T-cell (primary cell): ENCODE measurements at regions of chr5 and their contacts with region 1.

Region 1: GRCh38 chr5:139633295-139634027 is 14.7 kb upstream of the CXXC5 start:
- DNase-seq: peak in 30 of 35 experiments; percentile 32 to 87 (median 54)
- ATAC-seq: peak; percentile 33 to 49 (median 42)
- H3K4me3 ChIP-seq: no peak overlapping the region
- H3K4me3 Mint-ChIP-seq: no peak overlapping the region
- H3K27ac ChIP-seq: no peak overlapping the region
- H3K27ac Mint-ChIP-seq: peak overlapping the region in 1 of 2 donors; percentile 19
- H3K4me1 ChIP-seq: peaks cover 17 to 51% of the 10 kb centered on the region in 2 experiments
- H3K4me1 Mint-ChIP-seq: peaks cover 41 to 43% (median 42%) of the 10 kb centered on the region in 3 donors
- H3K27me3 ChIP-seq: no peaks in the 10 kb centered on the region
- H3K27me3 Mint-ChIP-seq: no peaks in the 10 kb centered on the region

Region 2: GRCh38 chr5:139560752-139561654 is 72.5 kb before region 1 on chr5 and contains the start of gene UBE2D2:
- CTCF ChIA-PET with region 1: interaction called in 1 of 2 experiments, 11 read pairs
- POLR2A ChIA-PET with region 1: interaction called in 1 of 2 experiments, 5 read pairs
- DNase-seq: peak; percentile 92 to 100 (median 96)
- ATAC-seq: peak; percentile 85 to 89 (median 86)
- H3K4me3 ChIP-seq: peak within 1 kb of the TSS; percentile 70 to 71
- H3K4me3 Mint-ChIP-seq: peak within 1 kb of the TSS; percentile 98 to 99 (median 98)
- H3K27ac ChIP-seq: peak within 1 kb of the TSS; percentile 84
- H3K27ac Mint-ChIP-seq: peak within 1 kb of the TSS; percentile 96 to 98
- H3K4me1 ChIP-seq: peaks cover 25 to 32% of the 10 kb centered on the region in 2 experiments
- H3K4me1 Mint-ChIP-seq: peaks cover 40 to 45% (median 43%) of the 10 kb centered on the region in 3 donors
- H3K27me3 ChIP-seq: no peaks in the 10 kb centered on the region
- H3K27me3 Mint-ChIP-seq: no peaks in the 10 kb centered on the region
- total RNA-seq, gene UBE2D2: 138 to 176 (median 152) TPM

Region 3: GRCh38 chr5:139648205-139649081 is 15.0 kb after region 1 on chr5 and contains the start of gene CXXC5:
- CTCF ChIA-PET with region 1: interaction called, 6 to 23 read pairs
- POLR2A ChIA-PET with region 1: interaction called in 1 of 2 experiments, 7 read pairs
- DNase-seq: peak in 20 of 35 experiments; percentile 33 to 71 (median 49)
- ATAC-seq: peak; percentile 48 to 61 (median 61)
- H3K4me3 ChIP-seq: peak within 1 kb of the TSS; percentile 51 to 68
- H3K4me3 Mint-ChIP-seq: peak within 1 kb of the TSS; percentile 68 to 93 (median 81)
- H3K27ac ChIP-seq: no peak within 1 kb of the TSS
- H3K27ac Mint-ChIP-seq: no peak within 1 kb of the TSS
- H3K4me1 ChIP-seq: peaks cover 13 to 60% of the 10 kb centered on the region in 2 experiments
- H3K4me1 Mint-ChIP-seq: peaks cover 26 to 60% (median 49%) of the 10 kb centered on the region in 3 donors
- H3K27me3 ChIP-seq: peaks cover 0 to 62% of the 10 kb centered on the region in 2 experiments
- H3K27me3 Mint-ChIP-seq: peaks cover 26 to 53% of the 10 kb centered on the region in 2 donors
- total RNA-seq, gene CXXC5: 5.1 to 7.6 (median 6.2) TPM

Region 4: DNA sequence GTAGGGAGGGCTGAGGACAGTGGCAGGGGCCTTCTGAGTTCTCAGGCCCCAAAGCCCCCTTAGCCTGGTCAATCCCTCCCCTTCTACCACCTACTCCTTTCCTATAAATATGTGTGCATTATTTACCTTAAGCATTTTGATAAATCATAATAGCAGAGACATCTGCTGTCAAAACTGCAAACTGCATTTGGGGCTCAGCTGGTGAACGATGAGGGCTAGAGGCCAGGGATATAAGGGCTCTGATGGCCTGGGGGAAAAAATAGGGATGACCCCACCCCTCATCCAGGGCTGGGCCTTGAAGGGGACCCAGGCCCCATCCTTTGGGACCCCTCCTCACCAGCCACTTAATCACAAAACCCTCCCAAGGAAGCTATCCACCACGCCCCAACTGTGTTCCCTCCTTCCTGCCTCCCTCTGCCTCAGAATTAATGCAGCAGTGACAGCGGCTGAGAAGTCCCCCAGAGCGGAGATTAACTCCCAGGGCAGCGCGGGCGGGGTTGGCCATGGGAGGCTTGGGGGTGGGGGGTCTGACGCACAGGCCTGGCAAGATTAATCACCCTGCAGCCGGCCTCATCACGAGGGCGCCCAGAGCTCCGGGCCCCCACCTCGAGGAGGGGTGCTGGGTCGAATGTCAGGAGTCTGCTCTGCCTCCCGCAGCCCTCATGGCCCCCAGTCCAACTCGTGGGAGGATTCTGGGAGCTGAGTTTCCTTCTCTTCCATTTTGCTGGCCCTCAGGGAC is 56.8 kb after region 1 on chr5:
- CTCF ChIA-PET with region 1: interaction called, 13 to 31 read pairs
- POLR2A ChIA-PET with region 1: no interaction called
- DNase-seq: peak in 3 of 35 experiments; percentile 11 to 58 (median 20)
- ATAC-seq: peak; percentile 43 to 65 (median 47)
- H3K4me3 ChIP-seq: no peak overlapping the region
- H3K4me3 Mint-ChIP-seq: no peak overlapping the region
- H3K27ac ChIP-seq: no peak overlapping the region
- H3K27ac Mint-ChIP-seq: no peak overlapping the region
- H3K4me1 ChIP-seq: peaks cover 0 to 9% of the 10 kb centered on the region in 2 experiments
- H3K4me1 Mint-ChIP-seq: peaks cover 0 to 10% (median 8%) of the 10 kb centered on the region in 3 donors
- H3K27me3 ChIP-seq: peaks cover 0 to 30% of the 10 kb centered on the region in 2 experiments
- H3K27me3 Mint-ChIP-seq: no peaks in the 10 kb centered on the region

Region 5: GRCh38 chr5:139701056-139701741 is 67.7 kb after region 1 on chr5:
- CTCF ChIA-PET with region 1: no interaction called
- POLR2A ChIA-PET with region 1: no interaction called
- DNase-seq: no peak
- ATAC-seq: peak in 1 of 4 experiments; percentile 28
- H3K4me3 ChIP-seq: peak overlapping the region in 1 of 2 donors; percentile 26
- H3K4me3 Mint-ChIP-seq: peak overlapping the region in 1 of 3 donors; percentile 32
- H3K27ac ChIP-seq: no peak overlapping the region
- H3K27ac Mint-ChIP-seq: no peak overlapping the region
- H3K4me1 ChIP-seq: peaks cover 7 to 44% of the 10 kb centered on the region in 2 experiments
- H3K4me1 Mint-ChIP-seq: peaks cover 20 to 42% (median 32%) of the 10 kb centered on the region in 3 donors
- H3K27me3 ChIP-seq: peaks cover 0 to 66% of the 10 kb centered on the region in 2 experiments
- H3K27me3 Mint-ChIP-seq: peaks cover 8 to 31% of the 10 kb centered on the region in 2 donors

Region 6: DNA sequence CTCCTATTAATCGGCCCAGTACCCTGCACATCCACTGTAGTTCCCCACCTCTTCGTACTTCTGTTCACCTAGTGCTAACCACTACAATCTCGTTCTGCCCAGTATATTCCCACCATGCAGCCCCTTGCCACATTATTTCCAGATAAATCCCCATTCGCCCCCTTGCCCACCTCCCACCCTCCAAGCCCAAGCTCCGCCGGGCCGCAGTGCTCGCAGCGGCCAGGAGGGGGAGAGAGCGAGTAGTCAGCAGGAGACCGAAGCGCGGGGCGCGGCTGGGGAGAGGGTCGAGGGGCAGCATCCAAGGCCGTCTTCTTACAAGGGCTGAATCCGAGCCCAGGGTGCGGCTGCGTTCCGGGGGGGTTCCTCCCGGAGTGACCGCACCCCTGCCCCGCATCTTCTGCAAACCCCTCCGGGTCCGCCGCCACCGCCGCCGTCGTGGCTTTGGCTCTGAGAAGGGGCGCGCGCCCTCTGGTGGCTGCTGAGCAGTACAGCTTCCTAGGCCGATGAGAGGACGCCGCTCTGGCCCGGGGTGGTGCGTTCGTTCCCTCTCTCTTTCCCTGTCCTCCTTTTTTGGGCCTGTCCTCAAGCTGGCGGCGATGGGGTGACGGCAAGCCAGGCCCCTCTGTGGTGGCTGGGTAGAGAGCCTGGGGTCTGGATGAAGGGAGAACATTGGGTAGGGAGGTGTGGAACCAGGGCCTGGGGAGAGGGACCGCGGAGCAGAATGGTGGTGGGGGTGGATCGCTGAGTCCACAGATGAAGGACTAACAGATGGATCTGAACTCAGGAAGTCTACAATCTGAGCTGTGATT is 132.2 kb after region 1 on chr5:
- CTCF ChIA-PET with region 1: interaction called, 19 to 40 read pairs
- POLR2A ChIA-PET with region 1: no interaction called
- DNase-seq: peak; percentile 45 to 92 (median 78)
- ATAC-seq: peak; percentile 89 to 92 (median 90)
- H3K4me3 ChIP-seq: peak overlapping the region; percentile 61 to 67
- H3K4me3 Mint-ChIP-seq: peak overlapping the region; percentile 59 to 71 (median 62)
- H3K27ac ChIP-seq: no peak overlapping the region
- H3K27ac Mint-ChIP-seq: peak overlapping the region; percentile 9 to 64
- H3K4me1 ChIP-seq: peaks cover 0 to 20% of the 10 kb centered on the region in 2 experiments
- H3K4me1 Mint-ChIP-seq: peaks cover 14 to 20% (median 14%) of the 10 kb centered on the region in 3 donors
- H3K27me3 ChIP-seq: peaks cover 3 to 47% of the 10 kb centered on the region in 2 experiments
- H3K27me3 Mint-ChIP-seq: peaks cover 24 to 27% of the 10 kb centered on the region in 2 donors

Region 7: DNA sequence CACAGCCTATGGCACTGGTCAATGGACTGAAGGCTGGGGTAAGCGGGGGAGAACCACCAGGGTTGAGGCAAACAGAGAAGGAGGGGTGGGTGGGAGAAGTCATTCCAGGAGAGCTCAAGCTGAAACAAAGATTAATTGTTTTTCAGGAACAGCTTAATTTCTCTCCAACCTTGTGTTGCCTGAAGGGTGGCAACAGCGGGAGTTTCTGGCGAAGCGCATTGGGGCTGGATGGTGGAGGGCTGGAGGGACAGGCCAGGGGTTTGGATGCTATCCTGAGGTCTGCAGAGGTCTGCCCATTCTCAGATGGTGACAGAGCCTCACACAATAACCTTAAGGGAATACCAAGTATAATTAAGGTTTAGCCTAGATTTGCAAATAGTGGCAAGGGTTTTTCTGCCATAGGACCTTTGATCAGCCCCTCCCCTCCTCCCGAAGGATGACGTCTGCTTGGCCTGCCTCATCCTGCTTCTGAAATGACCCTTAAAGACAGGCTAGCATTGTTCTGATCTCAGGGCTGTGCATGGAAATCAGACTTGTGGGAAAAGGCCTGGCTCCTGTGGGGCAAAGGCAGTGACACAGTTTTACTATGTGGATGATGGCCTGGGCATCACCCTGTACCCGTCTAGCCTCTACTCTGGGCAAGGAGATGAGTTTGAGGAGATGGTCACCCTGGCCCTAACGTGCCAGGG is 194.9 kb after region 1 on chr5:
- CTCF ChIA-PET with region 1: no interaction called
- POLR2A ChIA-PET with region 1: no interaction called
- DNase-seq: no peak
- ATAC-seq: no peak
- H3K4me3 ChIP-seq: no peak overlapping the region
- H3K4me3 Mint-ChIP-seq: no peak overlapping the region
- H3K27ac ChIP-seq: no peak overlapping the region
- H3K27ac Mint-ChIP-seq: no peak overlapping the region
- H3K4me1 ChIP-seq: no peaks in the 10 kb centered on the region
- H3K4me1 Mint-ChIP-seq: no peaks in the 10 kb centered on the region
- H3K27me3 ChIP-seq: peaks cover 3 to 25% of the 10 kb centered on the region in 2 experiments
- H3K27me3 Mint-ChIP-seq: peaks cover 7 to 13% of the 10 kb centered on the region in 2 donors